ENCODE measurements at regions of chr1 and their contacts with region 1.

Region 1: DNA sequence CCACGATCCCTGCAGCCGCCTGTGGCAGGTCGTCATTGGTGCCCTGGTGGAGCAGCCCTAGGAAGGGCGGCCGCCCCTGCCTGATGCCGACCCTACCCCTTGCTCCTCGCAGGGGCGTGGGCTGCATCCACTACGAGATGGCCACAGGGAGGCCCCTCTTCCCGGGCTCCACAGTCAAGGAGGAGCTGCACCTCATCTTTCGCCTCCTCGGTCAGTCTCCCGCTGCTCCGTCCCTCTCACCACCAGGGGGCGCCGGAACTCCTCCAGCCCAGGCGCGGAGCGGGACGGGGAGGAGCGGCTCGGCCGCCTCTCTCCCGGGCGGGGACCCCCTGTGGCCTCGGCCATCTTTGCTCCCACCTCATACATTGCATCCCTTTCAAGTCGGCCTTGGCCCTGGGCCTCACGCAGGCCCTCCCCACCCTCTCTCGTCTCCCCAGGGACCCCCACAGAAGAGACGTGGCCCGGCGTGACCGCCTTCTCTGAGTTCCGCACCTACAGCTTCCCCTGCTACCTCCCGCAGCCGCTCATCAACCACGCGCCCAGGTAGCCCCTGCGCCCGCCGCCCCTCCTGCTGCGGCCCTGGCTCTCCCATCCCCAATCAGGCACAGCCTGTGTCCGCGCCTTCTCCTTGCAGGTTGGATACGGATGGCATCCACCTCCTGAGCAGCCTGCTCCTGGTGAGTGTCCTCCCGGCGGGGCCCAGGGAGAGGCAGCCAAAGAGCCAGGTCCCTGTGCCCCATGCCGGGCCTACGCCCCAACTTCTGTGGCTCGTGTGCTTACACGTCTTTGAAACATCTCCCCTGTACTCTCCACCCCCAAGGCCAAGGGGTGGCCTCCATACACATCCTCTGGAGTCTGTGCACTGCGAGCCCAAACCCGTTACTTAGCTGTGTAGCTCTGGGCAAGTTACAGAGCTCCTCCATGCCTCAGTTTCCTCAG is 24.7 kb downstream of the CDK18 start:
- DNase-seq: peak; percentile 91
- H3K4me3 ChIP-seq: no peak overlapping the region
- H3K27ac ChIP-seq: no peak overlapping the region
- H3K4me1 ChIP-seq: peaks cover 4% of the 10 kb centered on the region
- H3K27me3 ChIP-seq: no peaks in the 10 kb centered on the region
- CTCF ChIP-seq: peak; percentile 88

Region 2: DNA sequence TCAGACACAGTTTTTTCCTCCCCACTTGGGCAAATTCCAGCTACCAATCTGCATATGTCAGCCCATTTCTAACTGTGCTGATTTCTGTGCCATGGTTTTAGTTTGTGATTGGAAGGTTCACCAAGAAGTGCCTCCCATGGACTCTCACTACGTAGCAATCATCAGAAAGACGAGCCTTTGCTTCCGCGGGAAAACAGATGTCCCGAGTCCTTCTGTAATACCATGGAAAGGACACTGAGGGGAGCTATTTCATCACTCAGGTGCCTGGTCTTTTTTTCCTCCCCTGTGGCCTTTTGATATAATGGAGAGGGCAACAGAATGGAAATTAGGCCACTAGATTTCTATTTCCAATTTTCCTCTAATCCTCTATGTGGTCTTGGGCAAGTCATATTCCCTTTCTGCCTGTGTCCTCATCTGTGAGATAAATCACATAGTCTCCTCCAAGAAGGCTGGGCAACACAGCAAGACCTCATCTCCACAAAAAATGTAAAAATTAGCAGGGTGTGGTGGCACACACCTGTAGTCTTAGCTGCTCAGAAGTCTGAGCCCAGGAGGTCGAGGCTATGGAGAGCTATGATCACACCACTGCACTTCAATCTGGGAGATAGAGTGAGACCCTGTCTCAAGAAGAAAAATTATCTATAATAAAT is 132.1 kb before region 1 on chr1:
- intact Hi-C with region 1: loop called (anchors 10 kb)
- DNase-seq: peak; percentile 28
- H3K4me3 ChIP-seq: no peak overlapping the region
- H3K27ac ChIP-seq: no peak overlapping the region
- H3K4me1 ChIP-seq: no peaks in the 10 kb centered on the region
- H3K27me3 ChIP-seq: no peaks in the 10 kb centered on the region
- CTCF ChIP-seq: peak; percentile 61

Region 3: GRCh38 chr1:205430696-205431305 is 98.4 kb before region 1 on chr1:
- intact Hi-C with region 1: no loop called
- DNase-seq: peak; percentile 80
- H3K4me3 ChIP-seq: peak overlapping the region; percentile 48
- H3K27ac ChIP-seq: no peak overlapping the region
- H3K4me1 ChIP-seq: peaks cover 4% of the 10 kb centered on the region
- H3K27me3 ChIP-seq: no peaks in the 10 kb centered on the region
- CTCF ChIP-seq: peak; percentile 69

Region 4: GRCh38 chr1:205591522-205592351 is 62.6 kb after region 1 on chr1:
- intact Hi-C with region 1: loop called (anchors 5 kb)
- DNase-seq: peak; percentile 96
- H3K4me3 ChIP-seq: peak overlapping the region; percentile 22
- H3K27ac ChIP-seq: peak overlapping the region; percentile 35
- H3K4me1 ChIP-seq: peaks cover 3% of the 10 kb centered on the region
- H3K27me3 ChIP-seq: no peaks in the 10 kb centered on the region
- CTCF ChIP-seq: peak; percentile 97

Region 5: DNA sequence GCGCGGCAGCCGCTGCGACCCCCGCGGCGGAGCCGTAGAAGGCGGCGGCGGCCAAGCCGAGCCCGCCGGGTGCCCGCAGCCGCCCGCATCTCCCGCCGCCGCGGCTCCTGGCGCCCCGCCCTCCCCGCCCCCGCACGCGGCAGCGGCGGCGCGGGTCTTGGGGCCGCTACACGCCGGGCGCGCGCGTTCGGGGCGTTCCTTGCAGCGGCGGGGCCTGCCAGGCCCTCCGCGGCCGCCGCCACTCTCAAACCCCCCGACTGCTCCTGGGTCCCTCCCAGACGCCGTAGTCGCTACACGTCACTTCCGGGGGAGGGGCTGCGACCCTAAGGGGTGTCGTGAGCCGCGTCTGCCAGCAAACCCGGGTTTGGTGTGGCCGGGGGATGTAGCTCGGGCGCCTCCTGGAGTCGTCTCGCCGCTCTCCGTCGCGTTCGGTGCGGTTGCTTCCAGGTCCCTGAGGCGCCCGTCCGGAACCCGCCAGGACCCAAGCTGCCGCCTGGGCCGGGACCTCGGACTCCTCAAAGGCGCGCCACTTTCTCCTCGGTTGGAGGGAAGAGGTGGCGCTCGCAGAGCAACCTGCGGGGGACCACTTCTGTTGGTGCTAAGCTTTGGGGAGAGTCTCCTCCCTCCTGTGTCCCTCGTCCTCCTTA is 102.7 kb after region 1 on chr1 and contains the start of gene ELK4:
- intact Hi-C with region 1: loop called (anchors 5 kb)
- DNase-seq: peak; percentile 99
- H3K4me3 ChIP-seq: peak within 1 kb of the TSS; percentile 56
- H3K27ac ChIP-seq: peak within 1 kb of the TSS; percentile 86
- H3K4me1 ChIP-seq: no peaks in the 10 kb centered on the region
- H3K27me3 ChIP-seq: no peaks in the 10 kb centered on the region
- CTCF ChIP-seq: peak; percentile 51
- total RNA-seq, gene ELK4: 30.5 to 37.6 TPM

Region 6: DNA sequence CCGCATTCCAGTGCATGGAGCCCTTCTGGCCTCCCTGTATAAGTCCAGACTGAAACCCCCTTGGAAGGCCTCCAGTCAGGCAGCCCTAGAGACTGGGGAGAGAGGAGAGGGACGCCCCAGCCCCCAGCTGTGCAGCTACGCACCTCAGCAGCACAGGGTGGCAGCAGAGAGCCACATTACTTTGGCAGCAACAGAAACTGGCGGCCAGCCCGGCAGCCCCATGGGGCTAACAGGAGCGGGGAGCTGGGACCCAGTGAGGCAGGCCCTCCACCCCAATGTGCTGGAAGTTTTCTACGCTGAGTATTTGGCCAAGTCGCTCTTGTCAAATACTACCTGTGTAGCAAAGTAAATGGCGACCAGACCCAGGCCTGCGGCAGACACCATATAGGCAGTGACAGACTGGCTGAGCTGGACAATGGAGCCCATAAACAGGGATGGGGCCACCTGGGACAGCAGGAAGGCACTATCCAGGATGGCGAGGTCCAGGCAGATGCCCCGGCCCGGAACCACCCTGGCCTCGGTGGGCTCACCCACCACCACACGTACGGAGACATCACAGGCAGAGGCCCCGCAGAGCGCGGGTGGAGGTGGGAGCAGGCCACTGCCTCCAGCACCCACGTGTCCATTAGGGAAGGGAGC is 129.9 kb after region 1 on chr1:
- intact Hi-C with region 1: loop called (anchors 2 kb)
- DNase-seq: peak; percentile 82
- H3K4me3 ChIP-seq: no peak overlapping the region
- H3K27ac ChIP-seq: no peak overlapping the region
- H3K4me1 ChIP-seq: no peaks in the 10 kb centered on the region
- H3K27me3 ChIP-seq: no peaks in the 10 kb centered on the region
- CTCF ChIP-seq: peak; percentile 89